ENCODE measurements at regions of chr17 and their contacts with region 1.

Region 1: DNA sequence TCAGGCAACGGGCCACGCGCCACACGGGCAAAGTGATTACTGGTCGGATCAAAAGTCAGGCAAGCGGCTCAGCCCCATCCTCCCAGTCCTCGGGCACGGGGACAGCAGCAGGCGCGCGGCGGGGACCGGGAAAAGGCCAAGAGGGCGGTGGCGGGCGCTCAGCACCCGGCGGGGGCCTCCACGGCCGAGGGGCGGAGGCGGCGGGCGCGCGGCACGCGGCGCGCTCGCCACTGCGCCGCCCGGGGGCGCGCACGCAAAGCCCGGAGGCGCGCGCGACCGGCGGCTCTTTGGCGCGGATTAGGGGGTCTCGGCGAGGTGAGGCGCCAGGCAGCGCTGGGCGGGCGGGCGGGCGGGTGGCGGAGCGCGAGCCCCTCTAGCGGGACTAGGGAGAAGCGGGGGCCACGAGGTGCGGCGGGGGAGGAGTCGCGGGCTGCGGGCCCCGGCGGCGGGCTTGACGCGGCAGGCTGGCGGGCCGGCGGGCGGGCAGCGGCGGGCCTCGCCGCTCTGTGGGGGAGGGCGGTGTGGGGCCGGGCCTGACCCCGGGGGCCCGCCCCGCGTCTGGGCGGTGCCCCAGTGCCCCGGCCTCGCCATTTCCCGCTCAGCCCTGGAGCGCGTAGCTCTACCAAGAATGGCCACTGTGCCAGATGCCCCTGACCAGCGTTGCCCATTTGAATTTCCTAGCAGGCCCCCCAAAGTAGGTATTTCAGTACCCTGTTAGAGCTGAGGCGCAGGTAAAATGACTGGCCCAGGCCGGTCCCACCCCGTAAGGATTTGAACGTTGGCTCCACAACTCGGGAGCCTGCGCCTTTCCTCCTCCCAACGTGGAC is at the starts of genes ACACA and TADA2A:
- DNase-seq: peak; percentile 94
- H3K4me3 ChIP-seq: peak within 1 kb of the TSS; percentile 81 to 94 (median 88)
- H3K27ac ChIP-seq: peak within 1 kb of the TSS; percentile 91 to 95 (median 94)
- H3K4me1 ChIP-seq: peaks cover 14 to 33% (median 30%) of the 10 kb centered on the region in 4 donors
- H3K27me3 ChIP-seq: no peaks in the 10 kb centered on the region
- CTCF ChIP-seq: peak in 1 of 3 experiments; percentile 16
- EP300 ChIP-seq: no peak
- POLR2A ChIP-seq: peak; percentile 47
- total RNA-seq, gene ACACA: 34.0 to 58.0 (median 50.5) TPM
- total RNA-seq, gene TADA2A: 11.5 to 23.7 (median 17.7) TPM

Region 2: DNA sequence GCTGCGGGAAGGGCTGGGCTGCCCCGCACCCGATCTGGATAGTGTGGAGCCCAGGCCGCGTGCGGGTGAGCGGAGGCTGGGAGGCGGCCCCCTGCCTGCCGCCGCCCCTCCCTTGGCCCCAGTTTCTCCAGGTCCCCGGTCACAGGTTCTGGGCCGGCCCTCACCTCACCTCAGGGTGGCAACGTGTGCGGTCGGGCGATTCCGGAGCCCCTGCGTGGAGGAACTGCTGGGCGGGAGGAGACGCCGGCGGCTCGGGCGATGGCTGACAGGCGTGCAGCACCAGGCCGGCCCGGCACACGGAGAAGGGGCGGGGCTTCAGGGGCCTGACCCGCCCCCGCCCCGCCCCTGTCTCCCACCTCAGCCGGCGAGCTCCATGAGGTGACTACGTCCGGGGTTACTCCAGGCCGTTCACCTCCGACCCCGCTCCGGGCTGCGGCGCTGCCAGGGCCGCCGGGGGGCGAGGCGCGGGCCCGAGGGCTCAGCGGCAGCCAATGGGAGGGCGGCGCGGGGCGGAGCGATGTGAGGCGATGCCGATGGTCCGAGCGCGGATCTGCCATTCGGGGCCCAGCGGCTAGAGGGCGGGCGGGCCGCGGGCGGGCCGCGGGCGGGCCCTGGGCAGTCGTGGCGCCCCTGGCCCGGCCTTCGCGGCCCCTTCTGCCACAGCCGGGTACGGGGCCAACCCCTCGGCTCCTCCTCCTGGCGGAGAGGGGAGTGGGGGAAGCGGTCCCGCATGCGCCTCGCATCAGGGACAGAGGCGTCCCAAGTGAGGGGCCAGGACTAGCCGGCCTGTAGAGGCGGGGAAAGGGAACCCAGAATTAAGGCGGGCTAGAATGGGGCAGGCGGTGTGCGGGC is 47.8 kb before region 1 on chr17:
- intact Hi-C with region 1: loop called (anchors 5 kb)
- DNase-seq: peak; percentile 97
- H3K4me3 ChIP-seq: peak overlapping the region; percentile 72 to 91 (median 82)
- H3K27ac ChIP-seq: peak overlapping the region; percentile 89 to 95 (median 90)
- H3K4me1 ChIP-seq: peaks cover 14 to 36% (median 26%) of the 10 kb centered on the region in 4 donors
- H3K27me3 ChIP-seq: no peaks in the 10 kb centered on the region
- CTCF ChIP-seq: peak; percentile 33 to 55 (median 46)
- EP300 ChIP-seq: no peak
- POLR2A ChIP-seq: peak; percentile 23

Region 3: DNA sequence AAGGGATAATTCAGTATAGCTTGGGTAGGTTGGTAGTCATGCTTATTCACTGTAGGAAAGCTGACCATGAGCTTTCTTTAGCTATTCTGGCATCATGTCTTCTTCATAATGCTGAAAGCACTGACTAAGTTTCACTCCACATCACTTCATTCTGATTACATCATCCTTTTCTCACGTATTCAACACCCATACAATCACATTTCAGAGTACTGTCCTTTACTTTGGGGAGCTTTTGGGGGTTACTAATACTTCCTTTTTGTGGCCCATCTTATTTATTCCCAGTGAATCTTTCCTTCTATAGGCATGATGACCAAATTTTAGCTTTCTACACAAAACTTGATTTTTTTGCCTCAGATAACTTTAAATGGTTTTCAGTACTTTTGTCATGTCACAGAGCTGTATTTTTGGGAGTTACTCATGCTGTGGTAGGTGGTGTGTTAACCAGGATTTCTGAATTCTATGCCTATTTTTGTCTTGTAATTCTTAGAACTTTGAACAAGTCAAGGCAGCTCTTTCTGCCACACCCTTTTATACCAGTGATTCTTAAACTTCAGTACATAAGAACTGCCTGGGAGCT is 23.3 kb after region 1 on chr17:
- intact Hi-C with region 1: no loop called
- DNase-seq: no peak
- H3K4me3 ChIP-seq: no peak overlapping the region
- H3K27ac ChIP-seq: no peak overlapping the region
- H3K4me1 ChIP-seq: no peaks in the 10 kb centered on the region
- H3K27me3 ChIP-seq: no peaks in the 10 kb centered on the region
- CTCF ChIP-seq: no peak
- EP300 ChIP-seq: no peak
- POLR2A ChIP-seq: no peak

Region 4: DNA sequence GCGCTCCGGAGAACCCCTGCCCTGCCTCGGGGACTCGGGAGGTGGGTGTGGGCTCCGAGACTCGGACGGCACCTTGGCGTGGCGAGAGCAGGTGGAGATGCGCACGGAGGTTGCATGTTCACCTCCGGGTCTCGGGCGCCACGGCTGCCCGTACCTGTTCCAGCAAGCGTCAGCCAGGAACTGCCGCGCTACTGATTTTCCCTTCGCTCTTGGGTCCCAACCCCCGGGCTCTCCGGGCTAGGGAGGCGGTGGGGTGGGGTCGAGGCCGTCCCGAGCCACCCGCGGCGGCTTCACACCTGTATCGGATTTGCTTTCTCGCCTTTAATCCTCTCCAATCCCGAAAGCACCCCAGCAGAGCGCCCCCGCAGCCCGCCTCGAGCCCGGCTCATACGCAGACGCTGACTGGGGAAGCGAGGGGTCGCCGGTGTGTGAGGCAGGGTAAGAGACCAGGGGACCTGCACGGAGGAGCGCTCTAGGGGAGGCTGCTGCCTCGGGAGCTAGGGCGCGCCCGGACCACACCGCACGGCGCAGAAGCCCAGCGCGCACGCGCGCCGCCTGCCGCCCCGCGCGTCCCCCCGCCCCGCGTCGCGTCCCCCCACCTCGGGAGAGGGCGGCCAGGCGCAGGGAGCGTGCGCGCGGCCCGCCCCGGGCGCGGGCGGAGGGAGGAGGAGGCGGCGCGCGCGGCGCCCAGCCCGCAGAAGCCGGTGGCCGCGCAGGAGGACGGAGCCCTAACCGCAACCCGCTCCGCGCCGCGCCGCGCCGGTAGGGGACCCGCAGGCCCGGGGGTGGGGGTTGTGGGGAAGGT is 82.6 kb after region 1 on chr17 and contains the start of gene DUSP14:
- intact Hi-C with region 1: loop called (anchors 5 kb)
- DNase-seq: no peak
- H3K4me3 ChIP-seq: peak within 1 kb of the TSS; percentile 76 to 89 (median 87)
- H3K27ac ChIP-seq: peak within 1 kb of the TSS; percentile 91 to 94 (median 92)
- H3K4me1 ChIP-seq: peaks cover 33 to 59% (median 53%) of the 10 kb centered on the region in 4 donors
- H3K27me3 ChIP-seq: no peaks in the 10 kb centered on the region
- CTCF ChIP-seq: no peak
- EP300 ChIP-seq: no peak
- POLR2A ChIP-seq: no peak
- total RNA-seq, gene DUSP14: 23.7 to 46.4 (median 35.9) TPM

Measured in esophagus muscularis mucosa (tissue), 4 donors.